ENCODE measurements at regions of chr12 and their contacts with region 1.

Region 1: DNA sequence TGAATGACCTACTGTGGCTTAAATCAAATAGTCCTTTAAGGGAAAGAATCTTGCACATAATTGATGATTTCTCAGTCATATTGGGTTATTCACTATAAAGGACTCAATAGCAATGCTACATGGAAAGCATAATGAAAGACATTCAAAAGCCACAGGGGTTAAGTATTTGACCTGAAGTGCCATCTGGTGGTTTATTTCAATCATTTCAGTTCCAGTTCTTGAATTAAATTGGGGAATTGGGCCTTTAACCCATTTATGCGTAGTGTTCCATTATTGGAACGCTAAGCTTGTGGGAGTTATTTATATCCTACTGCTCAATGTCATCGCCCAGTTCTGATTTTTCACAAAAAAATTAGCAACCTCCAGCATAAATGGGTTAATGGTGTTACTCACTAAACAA is 41.3 kb upstream of the C12orf71 start:
- DNase-seq: no peak
- ATAC-seq: no peak
- H3K4me3 ChIP-seq: no peak overlapping the region
- H3K4me3 Mint-ChIP-seq: no peak overlapping the region
- H3K27ac ChIP-seq: no peak overlapping the region
- H3K27ac Mint-ChIP-seq: no peak overlapping the region
- H3K4me1 ChIP-seq: no peaks in the 10 kb centered on the region
- H3K4me1 Mint-ChIP-seq: peaks cover 0 to 2% (median 0%) of the 10 kb centered on the region in 7 donors
- H3K27me3 ChIP-seq: no peaks in the 10 kb centered on the region
- H3K27me3 Mint-ChIP-seq: peaks cover 0 to 5% (median 0%) of the 10 kb centered on the region in 5 donors

Region 2: GRCh38 chr12:27034607-27035293 is 88.9 kb before region 1 on chr12:
- CTCF ChIA-PET with region 1: no interaction called
- POLR2A ChIA-PET with region 1: no interaction called
- intact Hi-C with region 1: loop called in 1 of 2 experiments (anchors 1 kb)
- DNase-seq: no peak
- ATAC-seq: no peak
- H3K4me3 ChIP-seq: no peak overlapping the region
- H3K4me3 Mint-ChIP-seq: no peak overlapping the region
- H3K27ac ChIP-seq: no peak overlapping the region
- H3K27ac Mint-ChIP-seq: no peak overlapping the region
- H3K4me1 ChIP-seq: no peaks in the 10 kb centered on the region
- H3K4me1 Mint-ChIP-seq: peaks cover 0 to 3% (median 0%) of the 10 kb centered on the region in 7 donors
- H3K27me3 ChIP-seq: no peaks in the 10 kb centered on the region
- H3K27me3 Mint-ChIP-seq: no peaks in the 10 kb centered on the region

Region 3: DNA sequence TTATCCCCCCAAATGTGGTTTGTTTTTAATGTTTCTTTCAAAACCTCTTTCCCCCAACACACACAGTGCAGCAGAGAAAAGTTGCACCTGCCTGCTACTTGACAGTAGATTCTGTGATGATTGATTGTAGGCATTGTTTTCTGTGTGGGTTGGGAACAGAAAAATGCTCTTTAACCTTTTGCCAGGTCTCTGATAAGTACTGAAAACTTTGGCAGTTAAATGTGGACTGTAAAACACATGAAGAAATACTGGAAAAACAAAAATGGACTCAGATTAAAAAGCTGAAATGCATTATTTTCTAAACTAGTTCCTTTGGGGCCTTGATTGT is 149.0 kb after region 1 on chr12:
- CTCF ChIA-PET with region 1: no interaction called
- POLR2A ChIA-PET with region 1: no interaction called
- intact Hi-C with region 1: no loop called
- DNase-seq: no peak
- ATAC-seq: no peak
- H3K4me3 ChIP-seq: no peak overlapping the region
- H3K4me3 Mint-ChIP-seq: no peak overlapping the region
- H3K27ac ChIP-seq: no peak overlapping the region
- H3K27ac Mint-ChIP-seq: no peak overlapping the region
- H3K4me1 ChIP-seq: no peaks in the 10 kb centered on the region
- H3K4me1 Mint-ChIP-seq: peaks cover 4 to 39% (median 31%) of the 10 kb centered on the region in 7 donors
- H3K27me3 ChIP-seq: no peaks in the 10 kb centered on the region
- H3K27me3 Mint-ChIP-seq: no peaks in the 10 kb centered on the region

Measured in naive thymus-derived CD4-positive, alpha-beta T cell (primary cell).